Right ventricle myocardium inferior (tissue), 1 donor: ENCODE measurements at regions of chr3 and their contacts with region 1.

Region 1: DNA sequence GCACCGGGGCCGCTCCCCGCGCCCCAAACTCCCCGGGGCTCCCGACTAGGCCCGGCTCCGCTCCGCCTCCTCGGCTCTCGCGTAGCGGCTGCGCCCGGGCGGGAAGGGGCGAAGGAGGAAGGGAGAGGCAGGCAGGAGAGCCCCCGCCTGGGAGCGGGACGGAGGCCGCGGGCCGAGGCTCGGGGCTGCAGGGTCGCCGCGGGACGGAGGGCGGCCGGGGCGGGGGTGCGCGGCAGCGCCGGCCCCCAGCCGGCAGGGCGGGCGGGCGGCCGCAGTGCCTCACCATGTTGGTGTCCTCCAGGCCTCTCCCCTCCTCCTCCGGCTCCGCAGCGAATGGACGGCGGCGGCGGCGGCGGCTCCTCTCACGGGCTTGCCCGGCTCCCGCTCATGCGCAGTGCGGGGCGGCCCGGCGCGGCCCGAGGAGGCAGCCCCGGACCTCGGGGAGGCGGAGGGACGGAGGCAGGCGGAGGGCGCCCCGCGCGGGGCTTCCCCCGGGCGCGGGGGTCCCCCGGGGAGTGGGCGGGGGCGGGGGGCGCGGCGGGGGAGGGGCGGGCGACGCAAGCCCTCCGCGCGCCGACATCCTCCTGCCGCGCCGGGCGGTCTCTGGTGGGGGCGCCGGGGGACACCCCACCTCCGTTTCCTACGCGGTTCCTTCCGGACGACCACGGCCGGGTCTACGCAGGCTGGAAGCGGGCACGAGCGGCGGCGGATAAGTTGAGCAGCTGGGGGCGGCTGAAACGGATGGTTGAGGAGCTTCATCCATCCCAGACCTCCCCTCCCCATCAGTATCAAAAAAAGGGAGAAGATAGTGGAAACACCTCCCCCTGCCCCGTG is at the start of gene DCUN1D1:
- DNase-seq: peak; percentile 96
- ATAC-seq: peak; percentile 97
- total RNA-seq, gene DCUN1D1: 36.9 TPM

Region 2: GRCh38 chr3:182782149-182782548 is 198.3 kb before region 1 on chr3:
- intact Hi-C with region 1: no loop called
- DNase-seq: no peak
- ATAC-seq: no peak

Region 3: GRCh38 chr3:183099026-183099837 is 118.8 kb after region 1 on chr3 and contains the start of gene MCCC1:
- intact Hi-C with region 1: loop called (anchors 2 kb)
- DNase-seq: peak; percentile 98
- ATAC-seq: peak; percentile 100
- total RNA-seq, gene MCCC1: 50.6 TPM